BJ (cell line): ENCODE measurements at regions of chr2 and their contacts with region 1.

Region 1: DNA sequence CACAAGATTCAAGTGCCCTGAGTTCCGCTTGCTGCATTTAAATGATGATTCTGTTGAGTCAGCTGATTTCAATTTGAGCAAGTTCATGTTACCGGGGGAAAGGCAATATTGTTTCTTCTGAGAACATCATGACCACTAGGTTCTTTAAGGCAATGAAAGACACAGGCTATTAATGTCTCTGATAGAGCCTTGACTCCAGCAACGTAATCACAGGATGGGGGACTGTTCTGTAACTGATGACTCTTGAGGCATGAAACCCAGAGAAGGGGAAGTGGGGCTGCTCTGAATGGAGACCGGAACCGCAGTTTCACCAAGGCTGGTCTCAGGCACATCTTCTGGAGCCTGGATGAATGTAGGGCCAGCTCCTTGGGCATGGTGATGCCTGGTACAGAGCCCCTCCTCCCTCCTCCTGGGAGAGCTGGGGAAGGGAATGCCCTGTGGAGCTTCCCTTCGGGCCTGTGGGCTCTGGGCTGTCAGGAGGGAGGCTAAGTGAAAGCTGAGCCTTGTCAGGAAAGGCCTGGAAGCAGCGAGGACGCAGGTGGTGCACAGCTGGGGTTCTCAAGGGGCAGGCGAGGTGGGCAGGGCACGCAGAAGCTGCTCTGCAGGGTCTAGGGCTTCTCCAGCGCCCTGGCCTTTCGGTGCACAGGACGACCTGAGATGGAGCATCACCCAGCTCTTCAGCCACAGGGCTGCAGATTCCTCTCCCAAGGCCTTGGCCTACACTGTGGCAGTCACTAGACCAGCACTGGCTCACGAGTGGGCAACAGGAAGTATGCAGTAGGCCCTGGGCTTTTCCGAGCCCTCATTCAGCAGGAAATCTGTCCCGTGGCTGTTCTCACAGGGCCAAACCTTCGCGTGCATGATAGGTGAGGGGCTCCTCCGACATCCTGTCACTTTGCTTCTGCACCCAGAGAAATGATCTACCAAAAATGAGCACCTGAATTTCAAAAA is 36.6 kb upstream of the PRLH start:
- DNase-seq: no peak
- H3K4me3 ChIP-seq: no peak overlapping the region
- H3K27me3 ChIP-seq: no peaks in the 10 kb centered on the region
- CTCF ChIP-seq: no peak

Region 2: GRCh38 chr2:237540823-237541222 is 11.1 kb after region 1 on chr2:
- CTCF ChIA-PET with region 1: interaction called, 10 read pairs
- POLR2A ChIA-PET with region 1: no interaction called
- DNase-seq: peak; percentile 25
- H3K4me3 ChIP-seq: no peak overlapping the region
- H3K27me3 ChIP-seq: no peaks in the 10 kb centered on the region
- CTCF ChIP-seq: no peak